WTC11 (cell line): ENCODE measurements at regions of chr14 and their contacts with region 1.

Region 1: DNA sequence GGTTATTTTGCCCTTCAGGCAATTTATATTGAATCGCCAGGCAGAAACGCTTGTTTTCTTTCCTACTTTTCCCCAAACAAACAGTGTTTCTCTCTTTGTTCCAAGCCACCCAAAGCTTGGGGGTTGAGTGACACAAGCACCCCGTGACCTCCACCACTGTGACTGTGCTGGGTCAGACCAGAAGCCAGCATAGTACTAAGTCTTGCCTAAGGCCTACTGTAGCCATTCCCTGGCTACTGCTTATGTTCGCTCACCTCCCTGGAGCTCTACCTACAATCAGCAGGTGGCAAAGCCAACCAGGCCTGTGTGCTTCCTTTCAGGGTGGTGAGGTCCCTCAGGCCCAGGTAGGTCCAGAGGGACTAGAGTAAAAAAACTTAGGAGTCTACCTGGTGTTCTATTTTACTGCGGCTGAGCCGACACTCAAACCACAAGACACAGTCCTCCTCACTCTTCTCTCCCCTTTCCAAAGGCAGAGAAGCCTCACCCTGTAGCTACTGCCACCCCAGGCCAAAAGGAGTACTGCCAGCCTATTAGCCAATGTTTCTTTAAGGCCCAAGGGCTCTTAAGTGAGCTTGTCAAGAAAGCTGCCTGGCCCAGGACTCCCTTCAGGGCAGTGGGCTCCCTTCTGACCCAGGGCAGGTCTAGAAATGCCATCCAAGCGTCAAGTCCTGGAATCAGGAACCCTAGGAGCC is 411.8 kb upstream of the MIS18BP1 start:
- DNase-seq: peak; percentile 59
- ATAC-seq: peak; percentile 100
- H3K4me3 Mint-ChIP-seq: no peak overlapping the region
- H3K27ac Mint-ChIP-seq: no peak overlapping the region
- H3K4me1 Mint-ChIP-seq: no peaks in the 10 kb centered on the region
- H3K27me3 Mint-ChIP-seq: no peaks in the 10 kb centered on the region; the same call in 1 of the 2 replicates
- CTCF ChIP-seq: peak; percentile 30; the same call in 1 of the 2 replicates

Region 2: DNA sequence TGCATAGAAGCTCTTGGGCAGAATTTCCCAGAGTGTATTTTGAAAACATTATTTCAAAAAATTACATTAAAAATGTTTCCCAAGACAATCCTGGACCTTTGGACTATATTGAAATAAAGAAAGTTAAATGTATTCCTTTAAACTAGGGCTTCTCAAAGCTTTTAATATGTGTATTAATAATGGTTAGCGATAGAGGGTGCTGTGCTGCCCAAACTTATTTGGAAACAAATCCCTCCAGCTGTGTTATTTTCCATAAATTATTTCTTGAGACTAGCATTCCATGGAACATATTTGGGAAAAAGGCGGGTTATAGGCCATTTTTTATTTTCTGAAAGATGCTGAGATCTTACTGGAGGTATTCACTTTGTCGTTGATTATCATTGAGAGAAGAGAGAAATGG is 14.1 kb before region 1 on chr14:
- CTCF ChIA-PET with region 1: interaction called, 10 read pairs
- POLR2A ChIA-PET with region 1: no interaction called
- DNase-seq: no peak
- ATAC-seq: no peak
- H3K4me3 Mint-ChIP-seq: no peak overlapping the region
- H3K27ac Mint-ChIP-seq: no peak overlapping the region
- H3K4me1 Mint-ChIP-seq: no peaks in the 10 kb centered on the region
- H3K27me3 Mint-ChIP-seq: no peaks in the 10 kb centered on the region
- CTCF ChIP-seq: no peak

Region 3: GRCh38 chr14:45743884-45744283 is 79.1 kb after region 1 on chr14:
- CTCF ChIA-PET with region 1: no interaction called
- POLR2A ChIA-PET with region 1: no interaction called
- DNase-seq: no peak
- ATAC-seq: no peak
- H3K4me3 Mint-ChIP-seq: no peak overlapping the region
- H3K27ac Mint-ChIP-seq: no peak overlapping the region
- H3K4me1 Mint-ChIP-seq: no peaks in the 10 kb centered on the region
- H3K27me3 Mint-ChIP-seq: no peaks in the 10 kb centered on the region
- CTCF ChIP-seq: no peak

Region 4: GRCh38 chr14:45757655-45758054 is 92.8 kb after region 1 on chr14:
- CTCF ChIA-PET with region 1: no interaction called
- POLR2A ChIA-PET with region 1: no interaction called
- DNase-seq: no peak
- ATAC-seq: no peak
- H3K4me3 Mint-ChIP-seq: no peak overlapping the region
- H3K27ac Mint-ChIP-seq: no peak overlapping the region
- H3K4me1 Mint-ChIP-seq: no peaks in the 10 kb centered on the region
- H3K27me3 Mint-ChIP-seq: peaks cover 3% of the 10 kb centered on the region; the same call in 1 of the 2 replicates
- CTCF ChIP-seq: no peak